Activated CD4-positive, alpha-beta T cell treated with anti-CD3 and anti-CD28 coated beads, Interleukin-2, amount 10 ng/mL, durations not matched to agents 7 days and 5 days (primary cell): ENCODE measurements at regions of chr3 and their contacts with region 1.

Region 1: DNA sequence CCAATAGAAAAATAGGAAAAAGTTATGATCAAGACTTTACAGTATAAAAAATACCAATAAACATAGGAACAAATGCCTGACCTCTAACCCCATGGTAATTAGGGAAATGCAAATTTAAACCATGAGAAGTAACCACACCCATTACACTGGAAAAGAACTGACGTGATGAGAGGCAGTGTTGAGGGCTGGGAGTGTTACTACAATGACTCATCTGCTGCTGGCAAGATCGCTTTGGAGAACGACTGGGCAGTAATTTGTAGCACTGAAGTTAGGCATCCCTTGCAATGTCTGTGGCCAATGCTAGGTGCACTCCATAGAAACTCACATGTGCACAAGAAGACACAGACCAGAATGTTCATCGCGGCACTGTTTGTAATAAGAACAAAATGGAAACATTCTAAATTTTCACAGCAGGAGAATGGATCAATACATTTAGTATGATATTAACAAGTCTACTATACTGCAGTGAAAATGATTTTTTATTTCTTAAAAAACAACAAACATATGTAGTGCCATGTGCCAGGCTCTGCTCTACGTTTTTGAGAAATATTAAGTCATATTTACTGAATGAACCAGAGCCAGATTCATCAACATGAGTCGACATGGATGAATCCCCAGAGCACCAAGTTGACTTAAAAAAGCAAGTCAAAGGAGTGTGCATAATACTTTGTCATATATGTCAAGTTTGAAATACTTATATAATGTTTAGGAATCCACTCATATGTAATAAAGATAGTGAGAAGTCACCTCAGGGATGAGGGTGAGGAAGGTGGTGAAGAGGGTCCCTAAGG is 37.6 kb upstream of the EPHB3 start:
- DNase-seq: peak; percentile 20
- H3K4me3 Mint-ChIP-seq: no peak overlapping the region
- H3K27ac Mint-ChIP-seq: no peak overlapping the region
- H3K4me1 Mint-ChIP-seq: peaks cover 19% of the 10 kb centered on the region
- H3K27me3 Mint-ChIP-seq: peaks cover 33% of the 10 kb centered on the region

Region 2: GRCh38 chr3:184234224-184234623 is 289.8 kb before region 1 on chr3:
- CTCF ChIA-PET with region 1: no interaction called
- POLR2A ChIA-PET with region 1: no interaction called
- DNase-seq: no peak
- H3K4me3 Mint-ChIP-seq: no peak overlapping the region
- H3K27ac Mint-ChIP-seq: no peak overlapping the region
- H3K4me1 Mint-ChIP-seq: peaks cover 6% of the 10 kb centered on the region
- H3K27me3 Mint-ChIP-seq: peaks cover 22% of the 10 kb centered on the region

Region 3: DNA sequence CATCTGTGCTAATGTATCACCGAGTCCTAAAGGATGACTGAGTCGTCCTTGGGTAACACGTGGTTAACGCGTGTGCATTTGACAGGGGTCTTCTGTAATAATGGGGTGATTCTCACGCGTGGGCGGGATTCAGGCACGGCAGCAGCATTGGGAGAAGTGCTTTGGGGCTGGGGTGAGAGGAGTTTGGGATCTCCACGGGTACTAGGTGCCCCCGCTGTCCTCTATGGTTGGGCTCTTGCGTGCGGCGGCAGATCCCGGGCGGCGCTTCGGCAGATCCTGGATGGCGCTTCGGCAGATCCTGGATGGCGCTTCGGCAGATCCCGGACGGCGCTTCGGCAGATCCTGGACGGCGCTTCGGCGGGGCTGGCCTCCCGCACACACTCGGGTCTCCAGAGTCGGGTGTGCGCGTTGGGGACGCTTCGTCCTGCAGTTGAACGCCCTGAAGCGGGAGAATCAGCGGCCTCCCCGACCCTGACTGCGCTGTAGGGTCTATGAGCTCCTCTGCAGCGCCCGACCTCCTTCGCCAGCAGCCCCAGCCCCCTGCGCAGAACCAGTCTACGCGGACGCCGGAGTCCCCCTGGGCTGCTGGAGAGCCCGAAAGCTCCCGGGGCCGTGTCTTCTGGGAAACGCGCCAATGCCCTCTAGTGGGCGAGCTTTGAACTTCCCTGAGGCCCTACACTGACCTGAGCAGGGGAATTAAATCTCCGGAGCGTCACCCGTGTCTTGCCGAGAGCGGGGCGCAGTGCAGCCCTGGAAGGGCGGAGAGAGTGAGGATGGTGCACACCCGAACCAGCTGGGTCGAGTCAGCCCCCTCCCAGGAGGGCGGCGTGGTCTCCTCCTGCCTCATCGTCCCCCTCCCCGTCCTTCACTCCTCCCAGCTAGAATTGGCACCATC is 10.5 kb before region 1 on chr3:
- CTCF ChIA-PET with region 1: interaction called, 10 read pairs
- POLR2A ChIA-PET with region 1: no interaction called
- DNase-seq: peak; percentile 85
- H3K4me3 Mint-ChIP-seq: peak overlapping the region; percentile 5
- H3K27ac Mint-ChIP-seq: no peak overlapping the region
- H3K4me1 Mint-ChIP-seq: peaks cover 12% of the 10 kb centered on the region
- H3K27me3 Mint-ChIP-seq: peaks cover 61% of the 10 kb centered on the region

Region 4: DNA sequence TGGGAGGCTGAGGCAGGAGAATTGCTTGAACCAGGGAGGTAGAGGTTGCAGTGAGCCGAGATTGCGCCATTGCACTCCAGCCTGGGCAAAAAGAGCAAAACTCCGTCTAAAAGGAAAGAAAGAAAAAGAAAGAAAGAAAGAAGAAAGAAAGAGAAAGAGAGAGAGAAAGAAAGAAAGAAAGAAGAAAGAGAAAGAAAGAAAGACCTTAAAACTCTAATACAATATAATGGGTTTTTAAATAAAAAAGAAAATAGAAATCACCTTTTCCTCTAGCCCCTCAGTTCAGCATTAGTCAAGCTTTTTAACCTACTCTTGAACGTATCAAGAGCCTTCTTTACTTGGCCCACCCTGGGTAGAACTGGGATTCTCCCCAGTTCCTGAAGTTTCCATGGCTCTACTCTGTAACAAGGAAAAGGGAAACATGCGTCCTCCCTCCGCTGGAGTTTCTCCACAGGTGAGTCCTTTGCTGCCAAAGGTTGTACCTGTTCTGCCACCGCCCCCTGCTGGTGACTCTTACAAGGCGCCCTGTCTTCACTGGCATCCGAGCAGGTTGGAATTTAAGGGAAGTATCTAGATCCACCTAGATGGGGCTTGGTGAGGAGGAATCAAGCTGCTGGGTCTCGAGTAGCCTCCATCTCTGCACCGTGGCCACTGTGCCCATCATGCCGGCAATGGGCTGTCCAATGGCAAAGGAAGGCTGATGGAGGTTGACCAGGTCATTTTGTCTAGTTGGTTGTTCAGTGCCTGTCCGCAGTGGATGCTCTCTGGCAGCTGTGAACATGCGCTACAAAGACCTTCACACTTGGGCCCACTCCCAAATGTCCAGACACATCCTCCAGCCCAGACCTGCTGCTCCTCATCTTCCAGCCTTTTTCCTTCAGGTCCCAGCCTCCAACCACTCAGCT is 17.0 kb after region 1 on chr3:
- CTCF ChIA-PET with region 1: interaction called, 12 read pairs
- POLR2A ChIA-PET with region 1: no interaction called
- DNase-seq: peak; percentile 84
- H3K4me3 Mint-ChIP-seq: no peak overlapping the region
- H3K27ac Mint-ChIP-seq: no peak overlapping the region
- H3K4me1 Mint-ChIP-seq: peaks cover 8% of the 10 kb centered on the region
- H3K27me3 Mint-ChIP-seq: peaks cover 23% of the 10 kb centered on the region